K562 (cell line): ENCODE measurements at regions of chr19 and their contacts with region 1.

Region 1: DNA sequence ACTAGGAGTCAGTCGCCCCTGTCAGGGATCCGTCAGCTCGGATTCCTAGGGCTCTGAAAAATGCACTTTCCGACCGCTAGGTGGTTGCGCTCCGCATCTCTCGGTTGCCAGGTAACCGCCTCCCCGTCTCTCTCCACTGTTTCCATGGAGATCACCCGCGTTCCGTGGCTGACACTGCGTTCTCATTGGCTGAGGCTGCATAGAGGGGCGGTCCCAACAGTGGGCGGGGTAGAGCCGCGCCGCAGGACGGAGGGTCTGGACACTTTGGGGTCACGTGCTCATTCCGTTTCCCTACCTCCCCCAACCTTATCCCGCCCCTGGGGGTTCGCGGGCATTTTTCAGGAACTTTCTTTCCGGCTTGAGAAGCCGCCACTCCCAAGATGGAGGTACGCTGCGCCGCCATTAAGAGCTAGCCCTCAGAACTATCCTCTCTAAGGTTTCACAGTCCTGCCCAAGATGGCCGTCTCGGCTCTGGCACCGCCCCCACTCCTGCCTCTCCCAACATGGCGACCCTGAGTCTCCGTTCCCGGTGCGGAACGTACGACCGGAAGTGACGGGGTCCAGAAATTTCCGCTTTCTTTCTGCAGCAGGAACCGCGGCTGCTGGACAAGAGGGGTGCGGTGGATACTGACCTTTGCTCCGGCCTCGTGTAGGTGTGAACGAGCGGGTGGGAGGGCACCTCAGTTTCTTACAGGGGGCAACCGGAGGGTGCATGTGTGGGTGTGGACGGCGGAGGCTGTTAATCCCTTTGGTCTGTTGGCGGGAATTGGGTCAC is at the starts of genes ODAD3 and PRKCSH:
- DNase-seq: peak; percentile 99
- ATAC-seq: peak; percentile 99
- H3K4me3 ChIP-seq: peak within 1 kb of the TSS; percentile 65
- H3K27ac ChIP-seq: peak within 1 kb of the TSS; percentile 63
- H3K4me1 ChIP-seq: peaks cover 11 to 22% of the 10 kb centered on the region in 2 experiments; a peak in 4 of 5 replicates
- H3K27me3 ChIP-seq: no peaks in the 10 kb centered on the region
- CTCF ChIP-seq: peak; percentile 73 to 96 (median 91)
- EP300 ChIP-seq: no peak; the same call in 1 of the 2 replicates
- POLR2A ChIP-seq: peak; percentile 83
- RAD21 ChIP-seq: peak in 1 of 2 experiments; percentile 4; a peak in 1 of 4 replicates
- polyA plus RNA-seq, gene ODAD3: 0.07 to 0.18 TPM
- polyA plus RNA-seq, gene PRKCSH: 2.3 to 6.9 TPM

Region 2: GRCh38 chr19:11142528-11143171 is 292.6 kb before region 1 on chr19:
- CTCF ChIA-PET with region 1: no interaction called
- POLR2A ChIA-PET with region 1: no interaction called
- in situ Hi-C with region 1: no loop called
- intact Hi-C with region 1: no loop called
- DNase-seq: peak; percentile 81 to 88 (median 84)
- ATAC-seq: peak; percentile 59
- H3K4me3 ChIP-seq: no peak overlapping the region
- H3K27ac ChIP-seq: peak overlapping the region; percentile 78; the same call in 2 of the 3 replicates
- H3K4me1 ChIP-seq: peaks cover 41 to 57% of the 10 kb centered on the region in 2 experiments
- H3K27me3 ChIP-seq: no peaks in the 10 kb centered on the region
- CTCF ChIP-seq: no peak
- EP300 ChIP-seq: no peak
- POLR2A ChIP-seq: 0 out of 2 replicates have a peak, but pooled peaks have one; percentile 46
- RAD21 ChIP-seq: no peak

Region 3: DNA sequence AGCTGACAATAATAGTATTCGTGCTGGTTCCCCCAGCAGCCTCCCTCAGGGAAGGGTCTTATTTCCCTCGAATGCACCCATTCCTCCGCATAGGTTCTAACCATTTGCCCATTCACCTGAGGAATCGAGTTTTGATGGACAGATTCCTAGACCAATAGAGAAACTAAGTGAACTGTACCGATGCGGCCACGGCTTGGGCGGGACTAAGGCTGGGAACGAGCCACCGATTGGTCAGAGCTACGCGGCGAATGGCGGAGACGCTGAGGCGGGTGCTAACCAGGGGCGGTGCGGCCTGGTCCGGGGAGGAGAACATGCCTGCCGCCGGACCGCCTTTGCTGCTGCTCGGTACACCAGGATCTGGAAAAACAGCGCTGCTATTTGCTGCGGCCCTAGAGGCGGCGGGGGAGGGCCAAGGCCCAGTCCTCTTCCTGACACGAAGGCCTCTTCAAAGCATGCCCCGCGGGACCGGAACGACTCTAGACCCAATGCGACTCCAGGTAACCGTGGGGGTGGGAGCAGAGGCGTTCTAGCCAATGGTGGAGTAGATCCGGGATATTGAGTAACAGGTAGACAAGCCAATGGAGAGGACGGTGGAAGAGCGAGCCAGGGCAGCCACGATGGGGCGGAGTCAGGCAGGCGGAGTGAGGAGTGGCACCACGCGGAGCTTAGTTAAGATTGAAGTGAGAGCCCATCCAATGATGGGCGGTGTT is 60.7 kb before region 1 on chr19 and contains the start of gene SWSAP1:
- CTCF ChIA-PET with region 1: no interaction called
- POLR2A ChIA-PET with region 1: interaction called, 6 read pairs
- in situ Hi-C with region 1: no loop called
- intact Hi-C with region 1: loop called (anchors 2 kb)
- DNase-seq: peak; percentile 95 to 100 (median 98)
- ATAC-seq: peak; percentile 97
- H3K4me3 ChIP-seq: peak within 1 kb of the TSS; percentile 59
- H3K27ac ChIP-seq: peak within 1 kb of the TSS; percentile 84
- H3K4me1 ChIP-seq: peaks cover 22 to 31% of the 10 kb centered on the region in 2 experiments
- H3K27me3 ChIP-seq: no peaks in the 10 kb centered on the region
- CTCF ChIP-seq: no peak
- EP300 ChIP-seq: no peak
- POLR2A ChIP-seq: peak; percentile 96
- RAD21 ChIP-seq: no peak; a peak in 1 of 4 replicates
- polyA plus RNA-seq, gene SWSAP1: 0.18 to 0.73 TPM

Region 4: DNA sequence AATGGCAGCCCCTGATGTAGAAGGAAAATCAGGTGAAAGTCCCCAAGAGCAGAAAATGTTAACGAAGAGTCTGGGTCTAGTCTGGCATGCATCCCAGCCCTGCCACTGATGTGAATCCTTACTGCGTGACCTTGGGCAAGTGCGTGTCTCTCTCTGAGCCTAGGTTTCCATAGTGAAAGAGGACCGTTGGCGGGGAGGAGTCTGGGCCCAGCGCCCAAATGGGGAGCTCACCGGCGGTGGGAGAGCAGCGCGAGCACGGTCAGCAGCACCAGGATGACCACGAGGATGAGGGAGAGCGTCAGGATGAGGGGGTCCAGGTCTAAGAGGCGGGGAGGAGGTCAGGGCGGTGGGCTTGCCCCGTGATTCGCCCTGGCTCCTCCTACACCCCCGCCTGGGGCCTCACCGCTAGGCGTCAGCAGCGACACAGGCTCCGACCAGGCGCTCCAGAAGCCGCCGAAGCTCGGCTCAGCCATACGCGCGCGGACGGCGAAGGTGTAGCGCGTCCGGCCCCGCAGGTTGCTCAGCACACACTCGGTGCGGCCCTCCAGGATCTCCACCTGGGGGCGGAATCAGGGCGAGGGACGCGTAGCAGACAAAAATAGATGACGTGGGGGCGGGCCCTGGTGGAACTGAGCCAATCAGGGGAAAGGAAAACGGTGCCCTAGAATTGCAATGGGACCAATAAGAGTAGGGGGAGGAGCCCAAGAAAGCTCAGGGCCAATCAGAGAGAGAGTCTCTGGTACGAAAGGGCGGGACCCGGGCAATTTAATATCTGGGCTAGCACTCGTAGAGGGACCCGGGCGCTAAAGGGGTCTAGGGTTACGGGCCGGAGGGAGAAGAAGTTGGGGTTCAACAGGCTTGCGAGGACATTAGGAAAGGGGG is 54.4 kb before region 1 on chr19:
- CTCF ChIA-PET with region 1: no interaction called
- POLR2A ChIA-PET with region 1: interaction called, 6 read pairs
- in situ Hi-C with region 1: no loop called
- intact Hi-C with region 1: loop called (anchors 1 kb)
- DNase-seq: peak in 3 of 4 experiments; percentile 61 to 65 (median 61)
- ATAC-seq: no peak
- H3K4me3 ChIP-seq: no peak overlapping the region
- H3K27ac ChIP-seq: no peak overlapping the region
- H3K4me1 ChIP-seq: peaks cover 16 to 57% of the 10 kb centered on the region in 2 experiments
- H3K27me3 ChIP-seq: no peaks in the 10 kb centered on the region
- CTCF ChIP-seq: no peak
- EP300 ChIP-seq: no peak
- POLR2A ChIP-seq: no peak
- RAD21 ChIP-seq: no peak